Sigmoid colon (tissue), 7 donors: ENCODE measurements at regions of chr16 and their contacts with region 1.

Region 1: DNA sequence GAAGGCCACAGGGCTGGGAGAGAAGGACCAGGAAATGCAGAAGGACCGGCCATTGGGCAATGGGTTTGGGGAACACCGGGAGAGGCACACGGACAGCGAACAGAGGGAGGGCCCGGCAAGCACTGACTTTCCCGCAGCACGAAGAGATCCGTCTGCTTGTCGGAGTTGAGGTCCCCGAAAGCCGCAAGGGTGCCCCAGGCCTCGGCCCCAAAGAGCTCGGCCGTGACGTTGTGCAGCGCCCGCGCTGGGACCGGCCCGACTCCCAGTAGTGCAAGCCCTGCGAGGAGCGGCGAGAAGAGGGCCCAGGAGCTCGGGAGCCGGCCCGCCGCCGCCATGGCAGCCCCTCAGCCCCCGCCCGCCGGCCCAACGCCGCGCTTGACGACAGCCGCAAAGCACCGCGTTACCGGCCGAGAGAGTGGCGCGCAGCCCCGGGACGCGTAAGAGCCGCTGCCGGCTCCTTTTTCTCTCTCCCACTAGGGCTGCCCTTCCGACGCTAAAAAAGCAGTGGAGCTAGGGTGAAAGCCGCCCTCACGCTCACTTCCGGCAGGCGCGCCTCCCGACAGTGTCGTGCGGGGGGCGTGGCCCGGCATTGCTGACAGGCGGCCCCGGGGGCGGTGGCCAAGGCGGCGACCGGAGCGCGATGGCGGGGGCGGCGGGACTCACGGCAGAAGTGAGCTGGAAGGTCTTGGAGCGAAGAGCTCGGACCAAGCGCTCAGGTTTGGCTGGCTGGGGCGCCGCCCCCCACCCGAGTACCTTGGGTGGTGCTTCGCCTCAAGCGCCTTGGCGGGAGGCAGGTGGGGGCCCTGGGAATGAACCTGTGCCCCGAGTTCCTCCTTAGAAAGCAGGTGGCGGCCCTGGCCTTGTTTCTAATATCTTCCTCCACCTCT is at the starts of genes ITFG1 and PHKB:
- DNase-seq: peak; percentile 92
- H3K4me3 ChIP-seq: peak within 1 kb of the TSS; percentile 72 to 94 (median 86)
- H3K27ac ChIP-seq: peak within 1 kb of the TSS; percentile 96 to 99 (median 96)
- H3K4me1 ChIP-seq: peaks cover 0 to 57% (median 47%) of the 10 kb centered on the region in 4 donors
- H3K27me3 ChIP-seq: no peaks in the 10 kb centered on the region
- CTCF ChIP-seq: no peak
- EP300 ChIP-seq: no peak
- POLR2A ChIP-seq: peak in 1 of 2 donors; percentile 31
- total RNA-seq, gene ITFG1: 36.0 to 59.3 (median 43.7) TPM
- total RNA-seq, gene PHKB: 60.5 to 95.6 (median 83.6) TPM

Region 2: GRCh38 chr16:47493381-47494337 is 32.7 kb after region 1 on chr16:
- intact Hi-C with region 1: loop called (anchors 2 kb)
- DNase-seq: no peak
- H3K4me3 ChIP-seq: peak overlapping the region in 2 of 4 donors; percentile 16 to 19
- H3K27ac ChIP-seq: peak overlapping the region; percentile 59 to 76 (median 68)
- H3K4me1 ChIP-seq: peaks cover 0 to 37% (median 29%) of the 10 kb centered on the region in 4 donors
- H3K27me3 ChIP-seq: no peaks in the 10 kb centered on the region
- CTCF ChIP-seq: no peak
- EP300 ChIP-seq: no peak
- POLR2A ChIP-seq: no peak